PC-3 (cell line): ENCODE measurements at regions of chr4 and their contacts with region 1.

Region 1: DNA sequence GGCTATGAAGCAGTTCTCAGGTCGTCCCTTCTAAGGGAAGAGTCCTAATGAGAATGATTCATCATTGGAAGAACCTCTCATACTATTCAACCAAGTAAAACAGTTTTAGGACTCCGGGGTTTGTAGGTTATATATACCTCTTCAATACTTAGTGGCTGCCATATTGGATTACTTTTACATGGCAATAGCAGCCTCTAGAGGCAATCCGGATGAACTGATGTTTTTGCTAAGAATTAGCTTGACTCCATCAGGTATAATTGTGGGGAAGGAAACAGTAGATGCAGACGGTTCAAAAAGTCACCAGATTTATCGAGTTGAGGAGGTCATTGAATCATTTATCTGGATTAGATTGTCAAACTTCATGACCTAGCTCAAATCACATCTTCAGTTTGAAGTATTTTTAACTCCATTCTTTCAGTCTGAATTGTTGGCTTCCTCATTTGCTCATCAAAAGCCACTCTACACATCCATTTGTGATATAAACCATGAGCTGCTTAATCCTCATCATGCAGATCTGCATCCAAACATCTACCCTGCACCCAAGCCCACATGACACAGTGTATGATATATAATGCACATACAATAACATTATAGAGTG is 28.4 kb downstream of the GUCY1B1 start:
- DNase-seq: peak; percentile 74
- ATAC-seq: peak; percentile 77
- H3K4me3 ChIP-seq: no peak overlapping the region
- H3K27ac ChIP-seq: no peak overlapping the region
- H3K4me1 ChIP-seq: peaks cover 3% of the 10 kb centered on the region
- H3K27me3 ChIP-seq: no peaks in the 10 kb centered on the region
- CTCF ChIP-seq: peak; percentile 89

Region 2: DNA sequence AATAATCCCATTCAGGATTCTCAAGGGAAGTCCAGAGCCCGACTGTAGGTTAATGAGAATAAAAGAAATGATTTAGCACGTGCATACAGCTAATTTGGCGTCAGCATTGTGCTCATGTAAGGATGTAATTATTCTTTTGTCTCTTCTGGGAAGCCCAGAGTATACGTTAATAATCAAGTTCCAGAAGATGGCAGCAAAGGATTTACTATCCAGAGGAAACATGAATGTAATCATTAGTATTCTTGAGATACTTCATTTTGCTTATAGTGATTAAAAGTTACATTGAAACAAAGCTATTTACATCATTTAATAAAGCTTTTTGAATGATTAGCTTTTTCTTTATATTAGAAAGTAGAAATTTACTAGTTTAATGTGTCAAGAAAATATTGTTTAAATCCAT is 383.3 kb before region 1 on chr4:
- CTCF ChIA-PET with region 1: interaction called, 3 read pairs
- POLR2A ChIA-PET with region 1: no interaction called
- intact Hi-C with region 1: loop called (anchors 1 kb)
- DNase-seq: peak; percentile 71
- ATAC-seq: peak; percentile 73
- H3K4me3 ChIP-seq: no peak overlapping the region
- H3K27ac ChIP-seq: no peak overlapping the region
- H3K4me1 ChIP-seq: peaks cover 7% of the 10 kb centered on the region
- H3K27me3 ChIP-seq: no peaks in the 10 kb centered on the region
- CTCF ChIP-seq: peak; percentile 68

Region 3: GRCh38 chr4:155822572-155822971 is 35.4 kb after region 1 on chr4:
- CTCF ChIA-PET with region 1: no interaction called
- POLR2A ChIA-PET with region 1: no interaction called
- intact Hi-C with region 1: no loop called
- DNase-seq: peak; percentile 83
- ATAC-seq: peak; percentile 98
- H3K4me3 ChIP-seq: no peak overlapping the region
- H3K27ac ChIP-seq: peak overlapping the region; percentile 89
- H3K4me1 ChIP-seq: peaks cover 28% of the 10 kb centered on the region
- H3K27me3 ChIP-seq: no peaks in the 10 kb centered on the region
- CTCF ChIP-seq: no peak